PC-9 (cell line): ENCODE measurements at regions of chr9 and their contacts with region 1.

Region 1: GRCh38 chr9:91164724-91165520 is 196.8 kb downstream of the AUH start:
- DNase-seq: peak; percentile 91 to 92
- H3K4me3 ChIP-seq: no peak overlapping the region
- H3K27ac ChIP-seq: peak overlapping the region; percentile 51; the same call in 1 of the 2 replicates
- H3K4me1 ChIP-seq: peaks cover 59% of the 10 kb centered on the region
- H3K27me3 ChIP-seq: no peaks in the 10 kb centered on the region
- CTCF ChIP-seq: no peak

Region 2: DNA sequence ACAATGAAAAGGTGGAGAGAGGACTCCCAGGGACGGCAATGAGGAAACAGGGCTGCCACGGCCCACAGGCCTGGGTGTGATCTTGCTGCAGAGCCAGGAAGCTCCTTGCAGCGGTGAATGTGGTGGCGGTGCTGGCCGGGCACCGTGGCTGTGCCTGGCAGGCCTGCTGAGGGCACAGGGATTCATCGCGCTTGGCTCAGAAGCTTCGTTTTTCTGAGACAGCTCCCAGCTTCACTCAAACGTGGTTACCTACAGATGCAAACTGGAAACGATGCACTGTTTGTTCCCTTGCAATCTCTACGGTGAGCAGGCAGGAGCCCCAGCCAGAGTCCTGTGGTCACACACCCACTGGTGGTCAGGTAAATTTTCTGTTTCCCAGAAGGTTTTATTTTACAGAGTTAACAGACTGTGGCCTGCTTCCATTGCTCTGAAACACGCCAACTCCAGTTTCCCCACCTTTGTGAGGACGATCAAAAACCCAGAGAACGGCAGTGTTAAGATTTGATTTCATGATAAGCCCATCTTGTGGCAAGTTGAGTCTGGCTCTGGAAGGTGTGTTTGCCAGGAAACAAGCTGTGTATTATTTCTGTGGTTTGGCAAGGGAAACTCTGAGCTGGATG is 12.8 kb after region 1 on chr9:
- CTCF ChIA-PET with region 1: no interaction called
- POLR2A ChIA-PET with region 1: no interaction called
- intact Hi-C with region 1: loop called (anchors 2 kb)
- DNase-seq: no peak
- H3K4me3 ChIP-seq: no peak overlapping the region
- H3K27ac ChIP-seq: no peak overlapping the region
- H3K4me1 ChIP-seq: peaks cover 19% of the 10 kb centered on the region
- H3K27me3 ChIP-seq: no peaks in the 10 kb centered on the region
- CTCF ChIP-seq: no peak